Dorsolateral prefrontal cortex (tissue), 120 donors: ENCODE measurements at regions of chr10 and their contacts with region 1.

Region 1: DNA sequence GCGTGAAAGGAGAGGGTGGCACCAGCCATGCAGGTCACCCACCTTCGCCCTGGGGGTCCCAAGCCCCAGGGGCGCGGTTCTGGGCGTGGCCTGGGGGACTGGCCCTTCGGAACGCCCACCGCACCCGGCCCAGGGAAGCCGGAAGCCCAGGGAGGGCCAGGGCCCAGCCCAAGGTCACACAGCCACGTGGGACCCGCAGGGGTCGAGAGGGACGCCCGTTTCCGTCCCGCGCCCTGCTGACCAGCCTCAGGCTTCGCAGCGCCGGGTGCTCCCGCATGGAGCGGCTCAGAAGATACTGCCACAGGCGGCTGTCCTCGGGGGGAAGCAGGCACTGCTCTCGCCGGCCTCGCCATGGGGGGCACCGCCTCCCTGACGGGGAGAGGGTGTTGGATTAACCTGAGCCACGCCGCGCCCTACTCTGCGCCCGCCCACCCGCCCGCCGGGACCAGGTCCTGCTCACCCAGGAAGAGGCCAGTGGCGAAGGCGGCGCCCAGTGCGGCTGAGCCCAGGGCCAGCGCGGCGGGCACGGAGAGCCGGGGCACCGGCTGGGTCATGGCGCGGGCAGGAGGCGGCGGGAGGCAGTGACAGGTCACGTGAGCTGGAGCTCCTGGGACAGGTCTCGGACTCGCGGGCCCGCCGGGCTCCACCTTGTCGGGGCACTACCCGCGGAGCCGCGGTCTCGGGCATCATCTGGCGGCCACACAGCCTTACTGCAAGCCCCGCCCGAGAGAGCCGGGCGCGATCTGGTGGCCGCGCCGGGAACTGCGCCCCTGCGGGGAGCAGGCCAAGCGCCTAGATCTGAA is at the start of gene COMTD1:
- DNase-seq: peak; percentile 79 to 95 (median 90)
- H3K4me3 ChIP-seq: peak within 1 kb of the TSS; percentile 67 to 97 (median 79)
- H3K27ac ChIP-seq: peak within 1 kb of the TSS in 58 of 59 donors; percentile 18 to 89 (median 74)
- H3K27me3 ChIP-seq: no peaks in the 10 kb centered on the region
- CTCF ChIP-seq: peak; percentile 98 to 100 (median 100)
- total RNA-seq, gene COMTD1: 3.0 to 19.0 (median 10.2) TPM

Region 2: DNA sequence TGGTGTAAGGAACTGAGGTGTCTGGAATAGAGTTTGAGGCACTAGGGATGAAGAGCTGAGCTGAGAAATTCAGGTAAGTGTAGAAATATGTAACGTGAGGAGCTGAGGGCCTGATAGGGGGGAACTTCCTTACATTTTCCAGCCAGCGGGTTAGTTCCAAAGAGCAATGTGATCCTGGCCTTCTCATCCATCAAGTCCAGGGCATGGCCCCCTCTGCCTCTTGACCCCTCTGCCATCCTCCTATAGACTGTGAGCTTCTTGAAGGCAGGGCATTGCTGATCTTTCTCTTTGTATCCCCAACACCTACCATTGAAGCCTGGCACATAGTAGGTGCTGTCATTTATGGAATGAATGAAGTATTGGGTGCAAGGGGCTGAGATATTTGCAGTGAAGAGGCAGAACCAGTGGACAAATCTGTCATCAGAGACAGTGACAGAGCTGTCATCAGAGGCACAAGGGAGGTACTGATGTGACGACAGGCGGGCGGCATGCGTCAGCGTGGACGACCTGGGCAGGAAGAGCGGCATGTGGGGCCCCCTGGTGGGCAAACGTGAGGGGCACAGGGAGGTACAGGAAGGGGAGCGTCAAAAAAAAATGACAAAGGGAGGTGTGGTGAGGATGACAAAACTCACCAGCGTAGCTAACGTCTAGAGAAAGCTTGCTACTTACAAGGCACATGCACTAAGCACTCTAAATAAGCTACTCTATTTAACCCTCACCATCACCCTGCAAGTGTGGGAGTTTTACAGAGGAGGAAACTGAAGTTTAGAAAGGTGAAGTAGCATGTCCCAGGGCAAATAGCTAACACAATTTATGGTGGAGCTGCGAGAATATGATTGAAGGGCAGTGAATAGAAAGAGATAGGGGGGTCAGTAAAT is 1356.0 kb before region 1 on chr10:
- intact Hi-C with region 1: loop called (anchors 10 kb)
- DNase-seq: peak in 8 of 10 donors; percentile 54 to 82 (median 76)
- H3K4me3 ChIP-seq: no peak overlapping the region
- H3K27ac ChIP-seq: peak overlapping the region in 4 of 59 donors; percentile 9 to 25 (median 13)
- H3K27me3 ChIP-seq: no peaks in the 10 kb centered on the region
- CTCF ChIP-seq: peak; percentile 43 to 96 (median 86)

Region 3: GRCh38 chr10:74151056-74151878 is 1084.3 kb before region 1 on chr10 and contains the start of gene ADK:
- intact Hi-C with region 1: loop called in 1 of 2 experiments (anchors 10 kb)
- DNase-seq: peak; percentile 97 to 100 (median 99)
- H3K4me3 ChIP-seq: peak within 1 kb of the TSS; percentile 59 to 99 (median 90)
- H3K27ac ChIP-seq: peak within 1 kb of the TSS; percentile 31 to 96 (median 90)
- H3K27me3 ChIP-seq: no peaks in the 10 kb centered on the region
- CTCF ChIP-seq: peak in 48 of 56 donors; percentile 7 to 60 (median 34)
- total RNA-seq, gene ADK: 26.7 to 48.2 (median 34.8) TPM

Region 4: GRCh38 chr10:74249865-74250264 is 985.7 kb before region 1 on chr10:
- intact Hi-C with region 1: loop called in 1 of 2 experiments (anchors 5 kb)
- DNase-seq: no peak
- H3K4me3 ChIP-seq: no peak overlapping the region
- H3K27ac ChIP-seq: no peak overlapping the region
- H3K27me3 ChIP-seq: no peaks in the 10 kb centered on the region
- CTCF ChIP-seq: no peak

Region 5: GRCh38 chr10:75111367-75111906 is 124.1 kb before region 1 on chr10 and contains the start of gene SAMD8:
- intact Hi-C with region 1: loop called (anchors 2 to 5 kb)
- DNase-seq: peak; percentile 89 to 95 (median 93)
- H3K4me3 ChIP-seq: peak within 1 kb of the TSS; percentile 66 to 98 (median 91)
- H3K27ac ChIP-seq: peak within 1 kb of the TSS; percentile 85 to 99 (median 97)
- H3K27me3 ChIP-seq: no peaks in the 10 kb centered on the region
- CTCF ChIP-seq: peak in 54 of 56 donors; percentile 40 to 83 (median 68)
- total RNA-seq, gene SAMD8: 55.2 to 91.8 (median 66.8) TPM

Region 6: DNA sequence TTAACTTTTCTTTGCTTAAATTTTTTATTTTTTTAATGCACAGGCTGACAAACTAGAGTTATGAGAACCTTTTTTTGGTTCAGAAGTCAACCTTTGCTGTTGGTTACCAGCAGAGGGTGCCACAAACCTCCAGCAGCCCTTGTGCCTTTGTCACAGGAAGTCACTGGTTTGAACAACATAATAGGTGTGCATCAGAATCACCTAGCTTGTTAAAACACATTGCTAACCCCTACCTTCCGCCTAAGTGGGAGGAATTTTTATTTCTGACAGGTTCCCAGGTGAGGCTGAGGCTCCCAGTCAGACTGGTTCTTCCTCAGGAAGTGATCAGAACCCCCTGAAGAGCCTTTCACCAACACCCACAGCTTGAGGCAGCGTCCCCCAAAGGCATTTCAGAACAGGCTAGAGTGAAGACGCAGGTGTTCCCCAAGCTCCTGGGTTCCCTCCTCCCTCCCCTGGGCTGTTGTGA is 47.6 kb before region 1 on chr10:
- intact Hi-C with region 1: loop called in 1 of 2 experiments (anchors 2 kb)
- DNase-seq: peak in 6 of 10 donors; percentile 5 to 55 (median 40)
- H3K4me3 ChIP-seq: no peak overlapping the region
- H3K27ac ChIP-seq: no peak overlapping the region
- H3K27me3 ChIP-seq: no peaks in the 10 kb centered on the region
- CTCF ChIP-seq: peak; percentile 25 to 73 (median 62)

Region 7: GRCh38 chr10:75210282-75211006 is 25.1 kb before region 1 on chr10 and contains the start of gene VDAC2:
- intact Hi-C with region 1: loop called in 1 of 2 experiments (anchors 2 kb)
- DNase-seq: peak; percentile 82 to 95 (median 88)
- H3K4me3 ChIP-seq: peak within 1 kb of the TSS; percentile 68 to 100 (median 96)
- H3K27ac ChIP-seq: peak within 1 kb of the TSS; percentile 93 to 100 (median 99)
- H3K27me3 ChIP-seq: no peaks in the 10 kb centered on the region
- CTCF ChIP-seq: peak in 29 of 56 donors; percentile 4 to 55 (median 21)
- total RNA-seq, gene VDAC2: 100 to 208 (median 160) TPM